Activated naive CD4-positive, alpha-beta T cell treated with anti-CD3 and anti-CD28 coated beads for 36 hours (primary cell): ENCODE measurements at regions of chr12 and their contacts with region 1.

Region 1: GRCh38 chr12:48716493-48717251 is at the start of gene CCNT1:
- DNase-seq: peak; percentile 100
- H3K4me3 Mint-ChIP-seq: peak within 1 kb of the TSS; percentile 90
- H3K27ac Mint-ChIP-seq: peak within 1 kb of the TSS; percentile 99
- H3K4me1 Mint-ChIP-seq: peaks cover 39% of the 10 kb centered on the region
- H3K27me3 Mint-ChIP-seq: no peaks in the 10 kb centered on the region
- total RNA-seq, gene CCNT1: 73.8 to 77.0 TPM

Region 2: GRCh38 chr12:47882781-47883546 is 833.7 kb before region 1 on chr12:
- CTCF ChIA-PET with region 1: no interaction called
- intact Hi-C with region 1: loop called (anchors 1 kb)
- DNase-seq: peak; percentile 73
- H3K4me3 Mint-ChIP-seq: peak overlapping the region; percentile 78
- H3K27ac Mint-ChIP-seq: peak overlapping the region; percentile 97
- H3K4me1 Mint-ChIP-seq: peaks cover 69% of the 10 kb centered on the region
- H3K27me3 Mint-ChIP-seq: no peaks in the 10 kb centered on the region

Region 3: GRCh38 chr12:48197971-48198671 is 518.6 kb before region 1 on chr12:
- CTCF ChIA-PET with region 1: no interaction called
- intact Hi-C with region 1: loop called (anchors 1 kb)
- DNase-seq: peak; percentile 98
- H3K4me3 Mint-ChIP-seq: peak overlapping the region; percentile 85
- H3K27ac Mint-ChIP-seq: peak overlapping the region; percentile 99
- H3K4me1 Mint-ChIP-seq: peaks cover 34% of the 10 kb centered on the region
- H3K27me3 Mint-ChIP-seq: peaks cover 3% of the 10 kb centered on the region

Region 4: DNA sequence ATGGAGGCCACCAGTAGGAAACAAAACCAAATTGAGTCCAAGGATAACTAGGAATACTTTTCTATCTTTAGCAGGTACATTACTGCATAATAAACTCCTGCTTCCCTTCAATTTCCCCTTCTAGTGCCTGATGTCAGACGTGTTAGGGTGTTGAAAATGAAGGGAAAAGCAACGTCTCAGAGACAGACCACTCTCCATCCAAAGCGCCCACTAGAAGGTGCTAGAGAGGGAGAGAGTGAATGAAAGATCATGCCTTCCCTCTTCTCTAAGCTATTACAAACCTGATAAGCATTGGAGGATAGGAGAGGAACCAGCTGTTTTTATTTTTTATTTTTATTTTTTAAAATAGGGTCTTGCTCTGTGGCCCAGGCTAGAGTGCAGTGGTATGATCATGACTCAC is 430.0 kb before region 1 on chr12:
- CTCF ChIA-PET with region 1: no interaction called
- intact Hi-C with region 1: no loop called
- DNase-seq: peak; percentile 18
- H3K4me3 Mint-ChIP-seq: no peak overlapping the region
- H3K27ac Mint-ChIP-seq: peak overlapping the region; percentile 62
- H3K4me1 Mint-ChIP-seq: peaks cover 16% of the 10 kb centered on the region
- H3K27me3 Mint-ChIP-seq: no peaks in the 10 kb centered on the region

Region 5: GRCh38 chr12:48681738-48682532 is 34.7 kb before region 1 on chr12 and contains the start of gene KANSL2:
- CTCF ChIA-PET with region 1: interaction called, 4 read pairs
- intact Hi-C with region 1: loop called (anchors 1 kb)
- DNase-seq: peak; percentile 99
- H3K4me3 Mint-ChIP-seq: peak within 1 kb of the TSS; percentile 98
- H3K27ac Mint-ChIP-seq: peak within 1 kb of the TSS; percentile 93
- H3K4me1 Mint-ChIP-seq: peaks cover 49% of the 10 kb centered on the region
- H3K27me3 Mint-ChIP-seq: no peaks in the 10 kb centered on the region
- total RNA-seq, gene KANSL2: 37.9 to 39.1 TPM

Region 6: GRCh38 chr12:48814262-48815125 is 97.8 kb after region 1 on chr12:
- CTCF ChIA-PET with region 1: interaction called, 6 read pairs
- intact Hi-C with region 1: loop called (anchors 1 kb)
- DNase-seq: peak; percentile 83
- H3K4me3 Mint-ChIP-seq: peak overlapping the region; percentile 93
- H3K27ac Mint-ChIP-seq: no peak overlapping the region
- H3K4me1 Mint-ChIP-seq: peaks cover 26% of the 10 kb centered on the region
- H3K27me3 Mint-ChIP-seq: peaks cover 15% of the 10 kb centered on the region

Region 7: GRCh38 chr12:49188914-49189367 is 472.3 kb after region 1 on chr12 and contains the start of gene TUBA1A:
- CTCF ChIA-PET with region 1: no interaction called
- intact Hi-C with region 1: loop called (anchors 2 kb)
- DNase-seq: peak; percentile 97
- H3K4me3 Mint-ChIP-seq: peak within 1 kb of the TSS; percentile 84
- H3K27ac Mint-ChIP-seq: peak within 1 kb of the TSS; percentile 86
- H3K4me1 Mint-ChIP-seq: peaks cover 13% of the 10 kb centered on the region
- H3K27me3 Mint-ChIP-seq: no peaks in the 10 kb centered on the region
- total RNA-seq, gene TUBA1A: 47.4 to 49.1 TPM